ENCODE measurements at regions of chr2 and their contacts with region 1.

Region 1: GRCh38 chr2:162153608-162154224 is 1.7 kb upstream of the GCG start:
- DNase-seq: peak; percentile 70
- H3K4me3 Mint-ChIP-seq: no peak overlapping the region
- H3K27ac Mint-ChIP-seq: no peak overlapping the region
- H3K4me1 Mint-ChIP-seq: peaks cover 4% of the 10 kb centered on the region
- H3K27me3 Mint-ChIP-seq: peaks cover 17% of the 10 kb centered on the region

Region 2: GRCh38 chr2:161471631-161472030 is 682.1 kb before region 1 on chr2:
- CTCF ChIA-PET with region 1: no interaction called
- POLR2A ChIA-PET with region 1: no interaction called
- intact Hi-C with region 1: no loop called
- DNase-seq: no peak
- H3K4me3 Mint-ChIP-seq: no peak overlapping the region
- H3K27ac Mint-ChIP-seq: no peak overlapping the region
- H3K4me1 Mint-ChIP-seq: no peaks in the 10 kb centered on the region
- H3K27me3 Mint-ChIP-seq: peaks cover 16% of the 10 kb centered on the region

Region 3: DNA sequence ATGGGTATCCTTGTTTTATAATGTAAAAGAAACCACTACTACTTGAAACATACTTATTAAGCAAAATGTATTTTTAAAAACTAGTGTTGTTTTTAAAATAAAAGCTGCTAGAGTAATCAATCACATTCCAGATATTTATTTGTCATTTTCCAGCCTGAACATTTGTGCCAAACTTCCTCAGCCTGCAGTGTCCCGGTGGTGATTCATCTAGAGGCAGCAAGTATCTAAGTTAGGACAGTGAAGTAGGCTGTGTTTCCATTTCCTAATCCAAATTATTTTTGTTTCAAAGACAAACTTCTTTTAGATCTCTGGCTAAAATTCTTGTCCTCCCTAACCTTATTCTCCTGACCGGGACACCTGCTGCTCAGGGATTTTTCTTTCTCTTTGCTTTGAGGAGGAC is 11.1 kb after region 1 on chr2:
- CTCF ChIA-PET with region 1: interaction called, 15 read pairs
- POLR2A ChIA-PET with region 1: no interaction called
- intact Hi-C with region 1: no loop called
- DNase-seq: no peak
- H3K4me3 Mint-ChIP-seq: no peak overlapping the region
- H3K27ac Mint-ChIP-seq: no peak overlapping the region
- H3K4me1 Mint-ChIP-seq: peaks cover 3% of the 10 kb centered on the region
- H3K27me3 Mint-ChIP-seq: peaks cover 25% of the 10 kb centered on the region